ENCODE measurements at regions of chr12 and their contacts with region 1.

Region 1: DNA sequence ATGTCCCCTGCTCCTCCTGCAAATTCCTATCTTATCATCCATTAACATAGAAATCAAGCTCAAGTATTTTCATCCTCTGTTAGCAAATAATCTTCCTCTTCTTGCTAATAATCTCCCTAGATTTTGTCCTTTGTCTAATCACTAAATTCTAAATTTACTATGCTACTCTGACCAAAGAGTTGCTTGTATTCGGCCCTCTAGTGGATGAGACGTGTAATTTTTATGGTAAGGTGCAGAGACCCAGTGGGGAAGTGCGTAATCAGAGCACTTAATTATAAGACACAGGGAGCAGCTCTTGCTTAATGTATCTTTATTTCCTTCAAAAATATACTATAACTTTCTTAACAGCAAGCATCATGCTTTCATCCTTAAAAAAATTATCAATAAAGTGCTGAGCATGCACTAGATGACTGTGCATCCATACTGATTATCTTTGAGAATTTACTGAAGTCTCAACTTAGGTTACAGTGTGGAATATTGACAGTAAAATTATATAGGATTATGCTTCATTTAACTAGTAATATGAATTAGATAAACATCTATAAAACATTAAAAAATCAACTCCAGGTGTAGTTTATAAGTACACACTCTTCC is 212.6 kb downstream of the SLC16A7 start:
- DNase-seq: peak; percentile 43
- CTCF ChIP-seq: peak; percentile 64

Region 2: GRCh38 chr12:59403259-59403932 is 405.0 kb before region 1 on chr12:
- CTCF ChIA-PET with region 1: interaction called, 20 read pairs
- POLR2A ChIA-PET with region 1: no interaction called
- DNase-seq: peak; percentile 9
- CTCF ChIP-seq: peak; percentile 77

Region 3: DNA sequence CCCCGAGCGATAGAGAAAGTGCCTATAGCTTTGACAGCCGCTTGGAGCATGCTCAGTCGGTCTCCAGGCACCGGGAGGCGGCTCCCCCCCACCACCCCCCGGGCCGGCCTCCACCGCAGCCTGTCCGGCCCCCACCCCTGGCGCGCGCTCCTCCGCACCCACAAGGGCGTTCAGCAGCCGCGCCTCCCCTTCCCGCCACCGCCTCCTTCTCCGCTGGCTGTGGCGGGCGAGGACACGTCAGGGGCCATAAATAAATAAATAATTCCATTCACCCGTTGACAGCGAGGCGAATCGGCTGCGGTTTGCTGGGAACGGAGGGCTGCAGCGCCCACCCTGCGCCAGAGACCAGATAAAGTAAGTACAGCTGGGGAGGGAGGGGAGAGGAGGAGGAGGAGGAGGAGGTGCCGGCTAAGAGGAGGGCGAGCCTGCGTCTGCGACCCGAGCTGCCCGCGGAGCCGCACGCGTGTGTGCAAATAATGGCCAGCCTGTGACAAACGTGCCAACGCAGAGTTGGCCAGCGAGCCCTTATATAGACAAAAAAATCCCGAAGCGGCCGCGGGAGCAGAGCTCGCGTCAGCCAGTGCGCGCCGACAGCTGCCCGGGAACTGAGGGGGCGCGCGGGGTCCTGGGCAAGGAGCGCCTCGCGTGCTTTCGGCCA is 212.4 kb before region 1 on chr12 and contains the start of gene SLC16A7:
- CTCF ChIA-PET with region 1: interaction called, 11 read pairs
- POLR2A ChIA-PET with region 1: no interaction called
- DNase-seq: peak; percentile 78
- CTCF ChIP-seq: no peak

Region 4: GRCh38 chr12:59820594-59821011 is 12.2 kb after region 1 on chr12:
- CTCF ChIA-PET with region 1: interaction called, 10 read pairs
- POLR2A ChIA-PET with region 1: no interaction called
- DNase-seq: no peak
- CTCF ChIP-seq: no peak

Region 5: DNA sequence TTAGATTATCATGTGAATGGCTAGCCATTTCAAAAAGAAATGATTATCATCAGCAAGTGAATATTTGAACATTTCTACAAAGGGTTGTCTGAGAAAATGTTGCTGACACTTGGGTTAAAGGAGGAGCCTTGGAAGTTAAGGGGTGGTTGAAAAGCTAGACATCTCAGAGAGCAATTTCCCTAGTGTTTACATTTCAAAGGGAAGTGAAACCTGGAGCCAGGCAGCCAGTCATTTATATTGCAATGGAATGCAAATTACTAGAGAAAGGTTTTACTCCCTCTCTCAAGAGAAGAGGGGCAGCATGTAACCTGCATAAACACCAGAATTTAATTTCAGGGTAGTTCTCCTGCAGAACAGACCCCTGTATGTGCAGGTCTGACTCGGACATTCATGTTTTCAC is 66.4 kb after region 1 on chr12:
- CTCF ChIA-PET with region 1: no interaction called
- POLR2A ChIA-PET with region 1: no interaction called
- DNase-seq: no peak
- CTCF ChIP-seq: no peak

Region 6: GRCh38 chr12:59944177-59944576 is 135.8 kb after region 1 on chr12:
- CTCF ChIA-PET with region 1: no interaction called
- POLR2A ChIA-PET with region 1: no interaction called
- DNase-seq: no peak
- CTCF ChIP-seq: no peak

Region 7: GRCh38 chr12:59972941-59973340 is 164.5 kb after region 1 on chr12:
- CTCF ChIA-PET with region 1: no interaction called
- POLR2A ChIA-PET with region 1: no interaction called
- DNase-seq: no peak
- CTCF ChIP-seq: no peak

Measured in GM10248 (cell line).